Activated CD4-positive, alpha-beta T cell treated with anti-CD3 and anti-CD28 coated beads for 36 hours (primary cell): ENCODE measurements at regions of chr5 and their contacts with region 1.

Region 1: GRCh38 chr5:132639706-132640130 is 18.3 kb upstream of the IL13 start:
- DNase-seq: peak; percentile 44
- ATAC-seq: peak; percentile 3
- H3K4me3 Mint-ChIP-seq: no peak overlapping the region
- H3K27ac Mint-ChIP-seq: no peak overlapping the region
- H3K4me1 Mint-ChIP-seq: peaks cover 71% of the 10 kb centered on the region
- H3K27me3 Mint-ChIP-seq: no peaks in the 10 kb centered on the region

Region 2: GRCh38 chr5:132526290-132526973 is 113.3 kb before region 1 on chr5:
- CTCF ChIA-PET with region 1: interaction called, 3 read pairs
- POLR2A ChIA-PET with region 1: no interaction called
- intact Hi-C with region 1: loop called (anchors 5 kb)
- DNase-seq: peak; percentile 60
- ATAC-seq: peak; percentile 34
- H3K4me3 Mint-ChIP-seq: no peak overlapping the region
- H3K27ac Mint-ChIP-seq: no peak overlapping the region
- H3K4me1 Mint-ChIP-seq: peaks cover 39% of the 10 kb centered on the region
- H3K27me3 Mint-ChIP-seq: peaks cover 3% of the 10 kb centered on the region

Region 3: GRCh38 chr5:132576123-132576522 is 63.6 kb before region 1 on chr5:
- CTCF ChIA-PET with region 1: no interaction called
- POLR2A ChIA-PET with region 1: no interaction called
- intact Hi-C with region 1: loop called in 1 of 2 experiments (anchors 1 kb)
- DNase-seq: no peak
- ATAC-seq: peak; percentile 74
- H3K4me3 Mint-ChIP-seq: no peak overlapping the region
- H3K27ac Mint-ChIP-seq: peak overlapping the region; percentile 17
- H3K4me1 Mint-ChIP-seq: peaks cover 30% of the 10 kb centered on the region
- H3K27me3 Mint-ChIP-seq: no peaks in the 10 kb centered on the region

Region 4: GRCh38 chr5:132662925-132663770 is 23.4 kb after region 1 on chr5:
- CTCF ChIA-PET with region 1: interaction called, 6 read pairs
- POLR2A ChIA-PET with region 1: interaction called, 5 read pairs
- intact Hi-C with region 1: loop called (anchors 1 to 2 kb)
- DNase-seq: peak; percentile 78
- ATAC-seq: peak; percentile 81
- H3K4me3 Mint-ChIP-seq: no peak overlapping the region
- H3K27ac Mint-ChIP-seq: peak overlapping the region; percentile 87
- H3K4me1 Mint-ChIP-seq: peaks cover 35% of the 10 kb centered on the region
- H3K27me3 Mint-ChIP-seq: peaks cover under 1% of the 10 kb centered on the region

Region 5: GRCh38 chr5:132714456-132715307 is 75.0 kb after region 1 on chr5:
- CTCF ChIA-PET with region 1: no interaction called
- POLR2A ChIA-PET with region 1: no interaction called
- intact Hi-C with region 1: loop called (anchors 1 to 2 kb)
- DNase-seq: no peak
- ATAC-seq: peak; percentile 86
- H3K4me3 Mint-ChIP-seq: peak overlapping the region; percentile 41
- H3K27ac Mint-ChIP-seq: no peak overlapping the region
- H3K4me1 Mint-ChIP-seq: peaks cover 11% of the 10 kb centered on the region
- H3K27me3 Mint-ChIP-seq: no peaks in the 10 kb centered on the region

Region 6: GRCh38 chr5:132753135-132753987 is 113.6 kb after region 1 on chr5:
- CTCF ChIA-PET with region 1: interaction called, 4 read pairs
- POLR2A ChIA-PET with region 1: no interaction called
- intact Hi-C with region 1: loop called in 1 of 2 experiments (anchors 1 kb)
- DNase-seq: peak; percentile 49
- ATAC-seq: peak; percentile 47
- H3K4me3 Mint-ChIP-seq: no peak overlapping the region
- H3K27ac Mint-ChIP-seq: peak overlapping the region; percentile 7
- H3K4me1 Mint-ChIP-seq: peaks cover 28% of the 10 kb centered on the region
- H3K27me3 Mint-ChIP-seq: no peaks in the 10 kb centered on the region

Region 7: DNA sequence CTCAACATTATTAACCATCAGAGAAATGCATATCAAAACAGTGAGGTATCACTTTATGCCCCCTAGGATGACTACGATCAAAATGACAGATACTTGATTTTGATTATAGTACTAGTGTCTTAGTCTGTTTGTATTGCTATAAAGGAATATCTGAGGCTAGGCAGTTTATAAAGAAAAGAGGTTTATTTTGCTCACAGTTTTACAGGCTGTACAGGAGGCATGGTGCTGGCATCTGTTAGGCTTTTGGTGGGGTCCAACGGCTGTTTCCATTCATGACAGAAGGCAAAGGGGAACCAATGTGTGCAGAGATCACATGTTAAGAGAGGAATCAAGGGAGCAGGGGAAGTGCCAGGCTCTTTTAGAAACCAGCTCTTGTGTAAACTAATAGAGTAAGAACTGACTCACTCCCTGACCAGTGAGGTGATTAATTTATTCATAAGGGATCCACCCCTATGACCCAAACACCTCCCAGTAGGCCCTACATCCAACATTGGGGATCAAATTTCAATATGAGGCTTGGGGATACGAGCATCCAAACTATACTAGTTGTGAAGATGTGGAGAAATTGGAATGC is 339.7 kb after region 1 on chr5:
- CTCF ChIA-PET with region 1: no interaction called
- POLR2A ChIA-PET with region 1: no interaction called
- intact Hi-C with region 1: no loop called
- DNase-seq: no peak
- ATAC-seq: no peak
- H3K4me3 Mint-ChIP-seq: no peak overlapping the region
- H3K27ac Mint-ChIP-seq: no peak overlapping the region
- H3K4me1 Mint-ChIP-seq: no peaks in the 10 kb centered on the region
- H3K27me3 Mint-ChIP-seq: no peaks in the 10 kb centered on the region